Heart right ventricle (tissue), 16 donors: ENCODE measurements at regions of chr9 and their contacts with region 1.

Region 1: DNA sequence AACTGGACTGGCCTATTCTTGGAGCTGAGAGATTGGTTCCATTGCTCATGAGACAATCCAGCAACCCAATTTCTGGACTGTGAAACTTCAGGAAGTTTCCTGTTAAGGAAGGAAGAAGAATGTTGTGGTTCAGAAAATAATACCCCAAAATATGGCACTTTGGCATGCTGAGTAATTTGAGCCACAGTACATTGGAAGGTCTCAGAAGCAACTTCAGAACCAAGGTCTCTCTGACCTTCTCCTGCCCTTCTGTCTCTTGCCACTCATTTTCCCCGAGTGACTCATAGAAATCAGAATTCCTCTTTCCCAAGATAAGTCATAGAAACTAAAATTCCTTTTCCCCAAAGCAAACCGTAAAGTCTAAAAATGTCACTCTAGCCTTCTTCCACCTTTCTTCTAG is 1366.1 kb downstream of the PTPRD start:
- DNase-seq: no peak
- ATAC-seq: no peak
- H3K4me3 ChIP-seq: no peak overlapping the region
- H3K27ac ChIP-seq: no peak overlapping the region
- H3K4me1 ChIP-seq: no peaks in the 10 kb centered on the region
- H3K27me3 ChIP-seq: no peaks in the 10 kb centered on the region
- CTCF ChIP-seq: no peak

Region 2: DNA sequence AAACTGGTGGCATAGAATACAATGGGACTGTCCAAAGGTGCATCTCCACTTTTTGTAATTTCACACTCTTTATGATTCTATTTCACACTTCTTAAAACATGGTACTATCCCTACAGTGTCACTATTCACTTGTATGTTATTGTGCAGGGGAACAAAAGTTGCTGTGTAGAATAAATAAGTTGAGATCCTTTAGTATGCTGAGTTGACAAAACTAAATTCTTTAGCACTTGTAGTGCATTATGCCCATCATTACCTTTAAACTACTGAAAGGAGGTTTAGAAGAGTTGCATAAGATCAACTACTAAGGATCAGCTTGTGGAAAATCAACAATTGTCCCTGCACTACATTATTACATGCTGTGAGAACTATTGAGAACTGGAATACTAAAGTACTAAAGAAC is 14.8 kb before region 1 on chr9:
- intact Hi-C with region 1: loop called in 1 of 10 experiments (anchors 2 kb)
- DNase-seq: no peak
- ATAC-seq: no peak
- H3K4me3 ChIP-seq: no peak overlapping the region
- H3K27ac ChIP-seq: no peak overlapping the region
- H3K4me1 ChIP-seq: no peaks in the 10 kb centered on the region
- H3K27me3 ChIP-seq: no peaks in the 10 kb centered on the region
- CTCF ChIP-seq: no peak

Region 3: GRCh38 chr9:9504869-9505268 is 258.1 kb after region 1 on chr9:
- intact Hi-C with region 1: no loop called
- DNase-seq: no peak
- ATAC-seq: no peak
- H3K4me3 ChIP-seq: no peak overlapping the region
- H3K27ac ChIP-seq: no peak overlapping the region
- H3K4me1 ChIP-seq: no peaks in the 10 kb centered on the region
- H3K27me3 ChIP-seq: no peaks in the 10 kb centered on the region
- CTCF ChIP-seq: no peak

Region 4: DNA sequence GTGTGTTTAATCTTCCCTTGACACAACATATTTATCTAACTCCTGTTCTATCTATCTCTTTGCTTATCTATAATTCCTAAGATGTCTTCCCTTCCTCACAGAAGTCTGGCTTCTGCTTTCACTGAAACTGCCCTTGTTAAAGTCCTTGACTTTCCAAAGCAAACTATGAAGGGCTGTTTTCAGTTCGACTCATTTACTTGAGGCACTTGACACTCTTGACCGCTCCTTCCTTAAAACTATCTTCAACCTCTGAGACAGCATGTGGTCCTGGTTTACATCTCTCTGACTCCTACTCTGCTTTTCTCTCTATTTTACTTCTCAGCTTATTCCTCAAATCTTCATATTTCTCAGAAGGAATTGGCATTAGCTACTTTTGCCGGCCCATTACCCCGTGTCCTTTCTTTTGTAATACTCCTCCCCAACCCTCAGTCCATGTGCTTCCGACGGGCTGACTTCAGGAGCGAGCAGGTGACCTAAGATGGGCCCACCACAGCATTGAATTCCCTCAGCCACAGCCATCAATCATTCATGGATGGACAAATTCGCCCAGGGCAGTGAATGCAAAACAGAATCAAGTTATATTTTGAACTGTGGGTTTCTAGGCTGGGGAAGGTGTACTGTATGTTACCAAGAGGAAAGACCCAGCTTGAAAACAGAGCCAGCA is 276.9 kb after region 1 on chr9:
- intact Hi-C with region 1: no loop called
- DNase-seq: no peak
- ATAC-seq: no peak
- H3K4me3 ChIP-seq: no peak overlapping the region
- H3K27ac ChIP-seq: no peak overlapping the region
- H3K4me1 ChIP-seq: no peaks in the 10 kb centered on the region
- H3K27me3 ChIP-seq: no peaks in the 10 kb centered on the region
- CTCF ChIP-seq: no peak